Aorta (tissue), 5 donors: ENCODE measurements at regions of chr2 and their contacts with region 1.

Region 1: DNA sequence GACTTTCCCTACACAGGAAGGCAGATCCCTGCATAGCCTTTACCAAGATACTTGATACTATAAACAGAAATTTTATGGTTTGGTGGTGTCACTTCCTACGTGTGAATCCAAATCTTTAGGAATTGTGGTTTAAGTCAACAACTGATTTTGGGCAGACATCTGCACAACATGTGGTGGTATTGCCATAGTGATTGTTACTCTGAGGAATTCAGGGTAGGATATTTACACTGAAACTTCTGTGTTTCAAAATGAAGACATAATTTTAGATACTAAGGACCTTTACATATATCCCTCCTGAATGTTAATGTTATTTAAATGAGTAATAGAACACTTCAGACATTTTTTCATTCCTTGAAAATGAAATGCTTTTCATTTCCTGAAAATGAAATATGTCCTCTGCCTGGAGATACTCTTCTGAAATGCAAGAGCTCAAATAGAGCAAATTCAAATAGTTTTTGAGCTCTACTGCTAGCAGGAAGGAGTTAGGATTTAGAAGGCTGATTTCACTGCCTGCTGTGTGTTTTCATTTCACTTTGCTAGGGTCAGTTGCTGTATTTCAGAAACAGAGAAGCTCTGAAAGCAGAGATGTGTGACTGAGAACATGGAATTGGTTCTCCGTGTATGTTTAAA is 77.2 kb downstream of the MDH1 start:
- DNase-seq: no peak
- ATAC-seq: no peak
- H3K4me3 ChIP-seq: no peak overlapping the region
- H3K27ac ChIP-seq: no peak overlapping the region
- H3K4me1 ChIP-seq: no peaks in the 10 kb centered on the region
- H3K27me3 ChIP-seq: no peaks in the 10 kb centered on the region

Region 2: GRCh38 chr2:62719757-62720156 is 946.2 kb before region 1 on chr2:
- intact Hi-C with region 1: loop called in 1 of 2 experiments (anchors 5 kb)
- DNase-seq: no peak
- ATAC-seq: no peak
- H3K4me3 ChIP-seq: no peak overlapping the region
- H3K27ac ChIP-seq: no peak overlapping the region
- H3K4me1 ChIP-seq: no peaks in the 10 kb centered on the region
- H3K27me3 ChIP-seq: no peaks in the 10 kb centered on the region

Region 3: GRCh38 chr2:63506320-63506719 is 159.6 kb before region 1 on chr2:
- intact Hi-C with region 1: no loop called
- DNase-seq: no peak
- ATAC-seq: no peak
- H3K4me3 ChIP-seq: no peak overlapping the region
- H3K27ac ChIP-seq: no peak overlapping the region
- H3K4me1 ChIP-seq: no peaks in the 10 kb centered on the region
- H3K27me3 ChIP-seq: no peaks in the 10 kb centered on the region

Region 4: DNA sequence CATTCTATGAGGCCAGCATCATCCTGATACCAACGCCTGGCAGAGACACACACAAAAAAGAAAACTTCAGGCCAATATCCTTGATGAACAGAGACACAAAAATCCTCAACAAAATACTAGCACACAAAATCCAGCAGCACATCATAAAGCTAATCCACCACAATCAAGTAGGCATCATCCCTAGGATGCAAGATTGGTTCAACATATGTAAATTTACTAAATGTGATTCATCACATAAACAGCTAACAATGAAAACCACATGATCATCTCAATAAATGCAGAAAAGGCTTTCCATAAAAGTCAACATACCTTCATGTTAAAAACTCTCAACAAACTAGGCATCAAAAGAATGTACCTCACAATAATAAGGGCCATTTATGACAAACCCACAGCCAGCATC is 143.0 kb before region 1 on chr2:
- intact Hi-C with region 1: no loop called
- DNase-seq: no peak
- ATAC-seq: no peak
- H3K4me3 ChIP-seq: no peak overlapping the region
- H3K27ac ChIP-seq: no peak overlapping the region
- H3K4me1 ChIP-seq: no peaks in the 10 kb centered on the region
- H3K27me3 ChIP-seq: no peaks in the 10 kb centered on the region

Region 5: DNA sequence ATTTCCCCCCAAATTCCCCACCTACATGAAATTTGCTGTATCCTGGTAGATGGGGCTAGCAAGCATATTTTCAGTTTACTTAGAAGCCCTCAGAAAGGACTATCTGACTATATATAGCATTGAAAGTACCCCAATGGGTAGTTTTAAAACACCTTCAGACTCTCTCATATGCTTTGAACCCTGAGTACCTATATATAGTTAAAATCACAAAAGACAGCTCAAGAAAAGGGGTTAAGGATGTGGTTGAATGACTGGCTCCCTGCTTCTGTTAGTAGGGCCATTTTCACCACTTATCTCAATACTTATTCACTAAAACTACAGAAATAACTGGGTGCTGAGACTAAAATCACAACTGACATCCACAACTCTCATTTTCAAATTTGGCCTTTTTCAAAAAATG is 96.2 kb before region 1 on chr2:
- intact Hi-C with region 1: no loop called
- DNase-seq: no peak
- ATAC-seq: no peak
- H3K4me3 ChIP-seq: no peak overlapping the region
- H3K27ac ChIP-seq: no peak overlapping the region
- H3K4me1 ChIP-seq: peaks cover 0 to 3% of the 10 kb centered on the region in 2 donors
- H3K27me3 ChIP-seq: no peaks in the 10 kb centered on the region